SK-N-SH (cell line): ENCODE measurements at regions of chr16 and their contacts with region 1.

Region 1: DNA sequence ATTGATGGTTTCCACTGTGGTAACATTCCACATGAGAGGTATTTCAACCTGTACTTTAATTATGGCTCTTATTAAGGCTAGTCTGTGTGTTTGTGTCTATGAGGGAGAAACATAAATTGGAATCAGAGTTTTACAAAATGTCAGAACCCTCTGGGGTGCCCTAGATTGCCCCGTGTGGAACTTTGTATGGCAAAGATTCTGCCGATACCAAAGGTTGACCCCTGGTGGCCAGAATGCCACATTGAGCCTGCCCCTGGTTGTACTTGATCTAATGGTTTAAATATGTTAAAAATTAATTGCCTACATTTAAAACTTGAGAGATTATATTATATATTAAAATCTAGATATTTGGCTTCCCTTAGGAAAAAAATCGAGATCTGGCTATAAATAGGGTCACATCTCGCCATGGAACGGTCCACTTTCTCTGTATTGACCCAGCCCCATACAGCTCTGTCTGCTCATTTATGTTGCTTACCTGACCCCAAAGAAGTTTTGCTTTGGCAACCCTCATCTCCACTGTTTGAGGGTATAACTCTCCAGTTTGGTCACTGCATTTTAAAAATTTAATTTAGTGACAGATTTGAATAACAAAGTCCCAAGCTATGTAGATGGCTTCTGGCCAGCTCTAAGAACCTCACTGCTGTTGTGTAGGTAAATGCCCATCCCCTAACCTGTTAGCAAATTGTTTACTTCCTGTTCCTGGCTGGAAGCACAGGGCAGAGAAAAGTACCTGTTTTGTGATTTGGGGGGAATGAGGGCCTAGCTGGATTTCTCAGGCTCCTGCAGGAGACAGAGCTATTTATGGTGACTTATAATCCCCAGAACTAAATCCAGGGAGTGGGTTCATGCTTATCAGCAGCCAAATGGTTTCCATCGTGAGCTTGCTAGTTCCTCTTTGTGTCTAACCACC is 95.0 kb downstream of the PLCG2 start:
- DNase-seq: peak; percentile 58
- H3K4me3 ChIP-seq: peak overlapping the region in 1 of 2 experiments; percentile 35; a peak in 1 of 4 replicates
- H3K27ac ChIP-seq: no peak overlapping the region
- H3K4me1 ChIP-seq: no peaks in the 10 kb centered on the region
- H3K27me3 ChIP-seq: no peaks in the 10 kb centered on the region; the same call in 1 of the 2 replicates
- CTCF ChIP-seq: peak; percentile 86
- EP300 ChIP-seq: no peak
- RAD21 ChIP-seq: peak; percentile 49

Region 2: DNA sequence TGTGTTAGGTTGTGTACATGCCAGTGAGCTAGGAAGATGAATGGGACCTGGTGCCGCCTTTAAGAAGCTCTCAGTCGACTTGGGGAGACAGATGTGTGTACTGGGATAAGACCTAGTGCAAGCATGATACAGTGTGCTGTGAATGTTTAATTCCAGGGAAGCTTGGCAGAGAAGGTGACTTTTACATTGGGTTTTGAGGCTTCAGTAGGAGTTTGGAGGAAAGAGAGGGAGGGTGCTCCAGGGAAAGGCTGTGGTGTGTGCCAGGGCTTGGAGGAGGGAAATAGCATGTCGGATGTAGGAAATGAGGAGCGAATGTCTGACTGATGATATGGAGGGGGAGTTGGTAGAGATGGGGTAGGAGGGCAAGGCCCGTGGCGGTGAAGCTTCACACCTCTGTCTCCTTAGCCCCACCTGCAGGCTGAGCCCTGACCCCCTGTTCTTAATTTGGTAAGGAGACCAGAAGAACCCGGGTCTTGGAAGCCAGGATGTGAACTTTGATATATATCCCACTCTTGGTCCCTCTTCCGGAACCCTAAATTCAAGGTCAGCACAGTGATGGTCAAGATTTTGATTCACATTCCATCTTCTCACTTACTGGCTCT is 18.4 kb before region 1 on chr16:
- CTCF ChIA-PET with region 1: interaction called, 19 read pairs
- POLR2A ChIA-PET with region 1: no interaction called
- DNase-seq: no peak
- H3K4me3 ChIP-seq: no peak overlapping the region
- H3K27ac ChIP-seq: no peak overlapping the region
- H3K4me1 ChIP-seq: no peaks in the 10 kb centered on the region
- H3K27me3 ChIP-seq: peaks cover 5% of the 10 kb centered on the region; the same call in 1 of the 2 replicates
- CTCF ChIP-seq: no peak
- EP300 ChIP-seq: no peak
- RAD21 ChIP-seq: no peak

Region 3: DNA sequence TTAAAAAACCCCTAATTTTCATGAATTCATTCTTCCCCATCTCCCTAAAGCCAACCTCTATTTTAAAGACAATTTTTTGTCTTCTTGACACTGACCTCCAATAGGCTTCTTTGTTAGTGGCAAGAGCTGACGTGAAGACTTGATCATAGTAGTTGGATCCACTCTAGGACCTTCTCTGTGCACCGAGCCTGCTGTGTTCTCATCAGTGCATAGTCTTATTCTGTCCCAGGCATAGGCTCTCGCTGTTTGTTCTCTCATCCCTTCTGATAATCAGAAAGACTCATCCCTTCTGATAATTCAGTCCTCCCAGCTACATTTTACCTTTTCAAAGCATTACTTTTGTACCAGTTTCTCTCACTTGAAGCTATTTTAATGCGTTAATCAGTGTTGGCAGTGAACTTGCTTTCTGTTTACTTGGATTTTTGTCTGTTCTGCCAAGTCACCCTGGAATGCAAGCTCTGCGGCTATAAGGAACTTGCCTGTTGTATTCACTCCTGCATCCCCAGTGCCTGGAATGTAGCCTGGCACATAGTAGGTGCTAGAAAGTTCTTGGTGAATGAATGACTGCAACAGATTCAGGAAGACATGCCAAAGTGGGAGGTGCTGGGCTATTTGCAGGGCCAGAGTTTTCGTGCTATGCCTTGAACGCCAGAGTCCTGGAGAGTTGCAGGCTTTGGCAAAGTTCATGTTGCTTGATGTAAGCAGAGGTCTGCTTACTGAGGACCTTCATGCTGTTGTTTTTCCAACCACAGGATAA is 443.5 kb after region 1 on chr16:
- CTCF ChIA-PET with region 1: no interaction called
- POLR2A ChIA-PET with region 1: no interaction called
- DNase-seq: no peak
- H3K4me3 ChIP-seq: no peak overlapping the region
- H3K27ac ChIP-seq: no peak overlapping the region
- H3K4me1 ChIP-seq: no peaks in the 10 kb centered on the region
- H3K27me3 ChIP-seq: no peaks in the 10 kb centered on the region
- CTCF ChIP-seq: no peak
- EP300 ChIP-seq: no peak
- RAD21 ChIP-seq: no peak